Vagina (tissue), 2 donors: ENCODE measurements at regions of chr4 and their contacts with region 1.

Region 1: GRCh38 chr4:169270810-169271691 is at the start of gene SH3RF1:
- DNase-seq: no peak
- H3K4me3 ChIP-seq: peak within 1 kb of the TSS; percentile 71 to 76
- H3K27ac ChIP-seq: peak within 1 kb of the TSS; percentile 87
- H3K4me1 ChIP-seq: peaks cover 51% of the 10 kb centered on the region
- H3K27me3 ChIP-seq: no peaks in the 10 kb centered on the region
- CTCF ChIP-seq: peak in 1 of 3 experiments; percentile 18
- POLR2A ChIP-seq: peak in 1 of 2 donors; percentile 83
- total RNA-seq, gene SH3RF1: 16.0 TPM

Region 2: DNA sequence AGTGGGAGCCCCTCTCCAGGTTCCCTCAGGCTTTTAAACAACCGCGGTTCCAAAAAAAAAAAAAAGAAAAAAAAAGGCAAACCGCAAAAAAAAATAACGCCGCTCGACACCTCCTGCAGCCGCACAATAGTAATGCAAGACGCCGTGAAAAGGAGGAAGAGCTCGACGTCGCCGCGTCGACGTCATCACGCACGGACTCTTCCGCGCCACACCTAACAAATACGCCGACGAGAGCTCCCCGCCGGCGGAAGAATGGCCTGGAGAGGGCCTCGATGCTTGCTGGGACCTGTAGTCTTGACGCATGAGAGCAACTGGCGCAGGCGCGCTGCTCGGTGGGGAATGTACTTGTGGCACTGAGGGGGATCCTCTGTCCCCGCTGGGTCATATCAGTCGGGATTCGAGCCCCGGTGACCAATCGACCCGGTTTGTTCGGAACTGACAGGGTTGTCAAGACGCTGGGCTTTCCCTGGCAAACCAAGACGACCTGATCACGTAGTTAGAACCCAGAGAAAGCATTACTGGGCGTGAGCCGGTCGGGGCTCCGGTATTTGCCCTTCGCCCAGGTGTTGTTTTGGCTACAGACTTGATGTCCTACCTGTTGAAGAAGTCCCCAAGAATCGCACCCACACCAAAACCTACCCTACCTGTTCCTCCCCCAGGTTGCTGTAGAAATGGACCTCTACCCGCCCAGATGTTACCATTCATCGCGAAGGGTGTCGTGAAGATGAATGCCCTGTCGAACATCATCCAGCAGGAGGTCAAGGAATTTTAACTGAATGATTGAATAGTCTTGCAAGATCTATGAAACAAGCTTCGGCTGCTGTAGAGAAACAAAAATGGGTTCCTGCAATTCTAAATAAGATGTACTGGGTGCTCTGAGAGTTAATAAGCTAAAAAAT is 260.7 kb before region 1 on chr4 and contains the start of gene CBR4:
- intact Hi-C with region 1: loop called (anchors 10 kb)
- DNase-seq: peak in 1 of 2 donors; percentile 99
- H3K4me3 ChIP-seq: peak within 1 kb of the TSS; percentile 76 to 79
- H3K27ac ChIP-seq: peak within 1 kb of the TSS; percentile 93
- H3K4me1 ChIP-seq: peaks cover 38% of the 10 kb centered on the region
- H3K27me3 ChIP-seq: no peaks in the 10 kb centered on the region
- CTCF ChIP-seq: peak in 1 of 3 experiments; percentile 32
- POLR2A ChIP-seq: peak; percentile 40 to 85
- total RNA-seq, gene CBR4: 13.0 TPM

Region 3: GRCh38 chr4:169335331-169335730 is 64.3 kb after region 1 on chr4:
- intact Hi-C with region 1: no loop called
- DNase-seq: no peak
- H3K4me3 ChIP-seq: no peak overlapping the region
- H3K27ac ChIP-seq: no peak overlapping the region
- H3K4me1 ChIP-seq: no peaks in the 10 kb centered on the region
- H3K27me3 ChIP-seq: no peaks in the 10 kb centered on the region
- CTCF ChIP-seq: no peak
- POLR2A ChIP-seq: no peak